ENCODE measurements at regions of chr20 and their contacts with region 1.

Region 1: GRCh38 chr20:11890331-11891080 is 27.2 kb upstream of the BTBD3 start:
- DNase-seq: peak; percentile 90 to 92
- ATAC-seq: peak; percentile 92 to 99 (median 96)
- H3K4me3 ChIP-seq: peak overlapping the region; percentile 45 to 94 (median 75)
- H3K27ac ChIP-seq: peak overlapping the region; percentile 77 to 97 (median 94)
- H3K4me1 ChIP-seq: peaks cover 0 to 42% (median 27%) of the 10 kb centered on the region in 9 donors
- H3K27me3 ChIP-seq: no peaks in the 10 kb centered on the region
- CTCF ChIP-seq: peak in 1 of 9 donors; percentile 18

Region 2: DNA sequence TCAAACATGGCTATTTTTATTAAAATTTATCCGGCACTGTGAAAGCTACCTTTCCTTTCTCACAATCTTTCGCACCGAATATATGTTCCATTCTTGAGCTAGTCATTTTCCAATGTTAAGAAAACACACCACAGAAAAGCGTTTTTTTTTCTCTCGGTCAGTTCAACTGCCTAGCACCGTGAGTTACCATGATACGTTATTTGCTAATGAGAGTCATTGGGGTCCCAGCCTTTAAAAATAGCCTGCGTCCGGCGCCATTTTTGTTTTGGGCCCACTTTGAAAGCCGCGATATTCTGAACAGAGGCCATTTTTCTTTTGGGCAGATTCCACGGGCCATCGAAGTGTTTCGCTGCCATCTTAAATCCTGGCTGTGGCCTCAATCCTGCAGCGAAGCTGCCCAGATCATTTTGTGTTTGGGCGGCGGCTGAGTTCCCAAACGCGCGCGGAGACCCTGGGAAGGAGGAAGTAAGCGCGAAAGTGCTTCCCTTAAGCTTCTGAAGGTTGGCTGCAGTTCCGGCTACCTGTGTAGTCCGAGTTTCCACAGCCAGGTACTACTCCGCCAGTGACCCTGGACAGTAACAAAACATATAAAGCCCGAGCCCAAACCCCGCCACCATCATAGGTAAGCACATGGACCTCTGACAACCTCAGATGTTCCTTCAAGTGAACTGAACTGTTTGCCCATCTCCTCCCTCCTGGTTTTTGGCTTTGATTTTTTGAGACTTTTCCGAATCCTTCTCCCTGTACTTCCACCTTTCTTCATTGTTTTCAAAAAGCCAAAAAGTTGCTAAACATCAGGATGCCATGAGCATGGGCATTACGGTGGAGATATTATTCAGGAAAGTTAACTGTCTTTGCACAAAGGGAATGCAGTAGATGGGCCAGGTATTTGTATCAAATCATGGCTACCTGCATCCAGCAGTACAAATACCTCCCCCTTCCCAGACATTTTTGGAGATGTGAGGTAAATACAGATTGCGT is 1455.4 kb before region 1 on chr20 and contains the start of gene SLX4IP:
- intact Hi-C with region 1: loop called in 1 of 10 experiments (anchors 10 kb)
- DNase-seq: peak; percentile 85 to 97
- ATAC-seq: peak; percentile 81 to 92 (median 88)
- H3K4me3 ChIP-seq: peak within 1 kb of the TSS; percentile 51 to 94 (median 86)
- H3K27ac ChIP-seq: peak within 1 kb of the TSS; percentile 54 to 97 (median 94)
- H3K4me1 ChIP-seq: peaks cover 6 to 41% (median 37%) of the 10 kb centered on the region in 9 donors
- H3K27me3 ChIP-seq: no peaks in the 10 kb centered on the region
- CTCF ChIP-seq: no peak
- total RNA-seq, gene SLX4IP: 1.6 to 3.1 (median 2.6) TPM

Region 3: DNA sequence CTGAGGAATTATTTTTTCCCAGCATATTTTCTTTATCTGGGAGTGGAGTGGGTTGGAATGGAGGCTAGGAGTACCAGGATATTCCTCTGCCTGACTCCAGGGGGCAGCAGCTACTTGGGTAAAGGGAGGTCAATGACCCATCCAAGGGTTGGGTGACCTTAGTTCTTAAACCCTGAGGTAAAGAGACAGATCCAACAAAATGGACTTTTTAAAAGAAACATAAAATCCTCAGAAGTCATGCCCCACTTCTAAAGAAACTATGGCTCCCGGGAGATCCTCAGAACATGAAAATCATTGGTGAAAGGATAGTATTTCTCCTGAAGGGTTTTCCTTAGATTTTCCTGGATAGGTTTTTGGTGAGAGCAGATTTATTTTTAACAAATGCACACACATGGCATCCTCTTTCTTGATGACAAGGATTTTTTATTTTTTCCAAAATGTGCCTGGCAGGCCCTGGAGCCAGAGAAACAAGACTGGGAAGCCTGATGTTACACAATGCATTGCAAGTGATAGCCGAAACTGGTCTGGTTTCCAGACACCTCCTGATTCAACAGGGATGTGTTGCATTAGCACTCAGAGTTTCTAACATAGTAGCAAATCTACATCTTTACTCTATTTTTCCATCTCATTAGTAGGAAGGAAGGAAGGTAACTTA is 213.7 kb before region 1 on chr20:
- intact Hi-C with region 1: loop called in 1 of 10 experiments (anchors 10 kb)
- DNase-seq: peak; percentile 46 to 56
- ATAC-seq: peak in 7 of 8 donors; percentile 82 to 93 (median 87)
- H3K4me3 ChIP-seq: peak overlapping the region in 1 of 10 donors; percentile 23
- H3K27ac ChIP-seq: peak overlapping the region in 3 of 10 donors; percentile 11 to 41 (median 19)
- H3K4me1 ChIP-seq: peaks cover 0 to 19% (median 4%) of the 10 kb centered on the region in 9 donors
- H3K27me3 ChIP-seq: peaks cover 0 to 7% (median 0%) of the 10 kb centered on the region in 7 donors
- CTCF ChIP-seq: peak; percentile 62 to 92 (median 84)

Region 4: GRCh38 chr20:11917663-11918062 is 27.2 kb after region 1 on chr20 and contains the start of gene BTBD3:
- intact Hi-C with region 1: loop called in 1 of 10 experiments (anchors 2 kb)
- DNase-seq: peak; percentile 37 to 83
- ATAC-seq: peak; percentile 94 to 97 (median 96)
- H3K4me3 ChIP-seq: peak within 1 kb of the TSS; percentile 4 to 62 (median 45)
- H3K27ac ChIP-seq: peak within 1 kb of the TSS; percentile 39 to 88 (median 62)
- H3K4me1 ChIP-seq: peaks cover 4 to 88% (median 68%) of the 10 kb centered on the region in 9 donors
- H3K27me3 ChIP-seq: no peaks in the 10 kb centered on the region
- CTCF ChIP-seq: peak in 6 of 9 donors; percentile 10 to 51 (median 24)
- total RNA-seq, gene BTBD3: 21.4 to 29.8 (median 23.8) TPM

Region 5: GRCh38 chr20:11979306-11979990 is 88.9 kb after region 1 on chr20:
- intact Hi-C with region 1: no loop called
- DNase-seq: no peak
- ATAC-seq: no peak
- H3K4me3 ChIP-seq: no peak overlapping the region
- H3K27ac ChIP-seq: no peak overlapping the region
- H3K4me1 ChIP-seq: peaks cover 0 to 8% (median 0%) of the 10 kb centered on the region in 9 donors
- H3K27me3 ChIP-seq: no peaks in the 10 kb centered on the region
- CTCF ChIP-seq: no peak

Region 6: GRCh38 chr20:12383821-12384220 is 493.3 kb after region 1 on chr20:
- intact Hi-C with region 1: loop called in 1 of 10 experiments (anchors 10 kb)
- DNase-seq: no peak
- ATAC-seq: peak in 6 of 8 donors; percentile 44 to 73 (median 58)
- H3K4me3 ChIP-seq: no peak overlapping the region
- H3K27ac ChIP-seq: peak overlapping the region in 9 of 10 donors; percentile 24 to 84 (median 45)
- H3K4me1 ChIP-seq: peaks cover 0 to 46% (median 15%) of the 10 kb centered on the region in 9 donors
- H3K27me3 ChIP-seq: no peaks in the 10 kb centered on the region
- CTCF ChIP-seq: no peak

Measured in heart right ventricle (tissue), 16 donors.